Activated CD4-positive, alpha-beta T cell treated with anti-CD3 and anti-CD28 coated beads, Interleukin-2, amount 10 ng/mL, durations not matched to agents 24 days and 14 days (primary cell): ENCODE measurements at regions of chr1 and their contacts with region 1.

Region 1: GRCh38 chr1:101004670-101005069 is 20.9 kb downstream of the DPH5 start:
- DNase-seq: no peak
- H3K4me3 Mint-ChIP-seq: no peak overlapping the region
- H3K27ac Mint-ChIP-seq: no peak overlapping the region
- H3K4me1 Mint-ChIP-seq: peaks cover 33% of the 10 kb centered on the region
- H3K27me3 Mint-ChIP-seq: no peaks in the 10 kb centered on the region

Region 2: GRCh38 chr1:100928128-100928527 is 76.5 kb before region 1 on chr1:
- intact Hi-C with region 1: loop called (anchors 5 kb)
- DNase-seq: peak; percentile 66
- H3K4me3 Mint-ChIP-seq: no peak overlapping the region
- H3K27ac Mint-ChIP-seq: no peak overlapping the region
- H3K4me1 Mint-ChIP-seq: peaks cover 44% of the 10 kb centered on the region
- H3K27me3 Mint-ChIP-seq: no peaks in the 10 kb centered on the region

Region 3: DNA sequence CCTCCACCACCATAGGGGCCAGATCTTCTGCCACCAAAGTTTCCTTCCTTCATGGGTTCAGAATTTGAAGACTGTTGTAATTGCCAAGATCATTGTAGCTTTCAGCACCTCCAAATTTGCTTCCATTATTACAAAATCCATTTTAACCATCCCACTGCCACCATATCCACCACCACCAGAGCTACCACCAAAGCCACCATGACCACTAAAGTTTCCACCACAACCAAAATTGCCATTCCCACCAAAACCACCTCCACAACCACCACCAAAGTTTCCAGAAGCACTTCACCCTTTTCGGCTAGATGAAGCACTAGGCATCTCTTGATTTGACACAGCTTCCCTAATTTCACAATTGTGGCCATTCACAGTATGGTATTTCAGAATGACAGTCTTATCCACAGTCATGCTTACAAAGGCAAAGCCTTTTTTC is 63.6 kb before region 1 on chr1:
- intact Hi-C with region 1: loop called (anchors 1 kb)
- DNase-seq: peak; percentile 71
- H3K4me3 Mint-ChIP-seq: peak overlapping the region; percentile 67
- H3K27ac Mint-ChIP-seq: peak overlapping the region; percentile 98
- H3K4me1 Mint-ChIP-seq: peaks cover 36% of the 10 kb centered on the region
- H3K27me3 Mint-ChIP-seq: peaks cover 2% of the 10 kb centered on the region

Region 4: GRCh38 chr1:101122452-101123166 is 117.9 kb after region 1 on chr1:
- intact Hi-C with region 1: loop called (anchors 5 kb)
- DNase-seq: no peak
- H3K4me3 Mint-ChIP-seq: peak overlapping the region; percentile 41
- H3K27ac Mint-ChIP-seq: peak overlapping the region; percentile 52
- H3K4me1 Mint-ChIP-seq: peaks cover 34% of the 10 kb centered on the region
- H3K27me3 Mint-ChIP-seq: no peaks in the 10 kb centered on the region